Posterior vena cava (tissue), 2 donors: ENCODE measurements at regions of chr17 and their contacts with region 1.

Region 1: GRCh38 chr17:17681187-17681848 is at the start of gene RAI1:
- DNase-seq: peak; percentile 91
- total RNA-seq, gene RAI1: 25.6 to 36.5 TPM

Region 2: DNA sequence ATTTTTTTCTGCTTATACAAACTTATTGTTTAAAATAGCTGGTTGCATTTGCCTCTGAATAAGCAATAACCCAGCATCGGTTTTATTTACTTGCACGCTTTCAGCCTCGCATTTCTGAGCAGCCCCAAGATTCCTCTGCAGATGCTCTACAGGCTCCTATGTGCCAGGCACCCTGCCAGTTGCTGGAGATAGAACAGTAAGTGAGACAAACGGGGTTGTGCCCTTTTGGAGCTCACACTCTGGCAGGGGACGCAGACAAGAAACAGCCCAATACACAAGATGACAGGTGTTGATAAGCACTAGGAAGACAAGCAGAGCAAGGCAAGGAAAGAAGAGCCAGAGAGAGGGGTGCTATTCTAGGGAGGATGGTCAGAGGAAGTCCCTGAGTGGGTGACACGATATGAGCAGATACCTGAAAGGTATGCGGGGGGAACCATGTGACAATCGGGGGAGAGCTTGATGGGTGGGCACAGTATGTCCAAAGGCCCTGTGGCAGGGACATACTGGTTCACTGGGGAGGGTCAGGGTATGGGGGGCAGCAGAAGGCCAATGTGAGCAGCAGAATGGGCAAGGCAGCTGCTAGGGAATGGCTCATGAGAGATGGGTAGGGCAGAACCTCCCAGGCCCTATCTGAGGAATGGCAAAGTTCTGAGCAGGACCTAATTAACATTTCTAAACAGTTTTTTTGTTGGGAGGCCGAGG is 1755.1 kb before region 1 on chr17:
- intact Hi-C with region 1: no loop called
- DNase-seq: peak; percentile 49

Region 3: DNA sequence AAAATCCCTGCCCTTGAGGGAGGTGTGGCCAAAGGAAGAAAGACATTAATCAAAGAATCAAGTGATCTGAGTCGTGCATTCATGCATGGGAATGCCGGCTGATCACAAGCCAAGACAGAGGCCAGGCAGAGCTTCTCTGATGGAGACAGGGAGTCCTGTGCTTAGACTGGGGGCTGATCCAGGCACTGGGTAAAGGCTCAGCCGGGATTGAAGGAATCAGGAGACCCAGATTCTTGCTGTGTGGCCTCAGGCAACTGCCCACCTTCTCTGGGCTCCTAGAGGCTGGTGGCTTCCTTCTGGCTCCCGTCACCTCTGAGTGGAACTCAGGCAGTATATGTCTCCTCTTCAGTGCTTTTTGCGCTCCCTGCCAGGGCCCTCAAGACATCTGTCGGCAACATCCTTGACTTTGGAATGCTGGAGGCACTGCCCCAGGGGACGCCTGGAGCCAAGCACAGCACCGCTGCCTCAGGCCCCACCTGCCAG is 17.6 kb after region 1 on chr17:
- intact Hi-C with region 1: no loop called
- DNase-seq: no peak

Region 4: GRCh38 chr17:17739388-17740066 is 58.2 kb after region 1 on chr17:
- intact Hi-C with region 1: loop called in 1 of 2 experiments (anchors 5 kb)
- DNase-seq: peak; percentile 86

Region 5: GRCh38 chr17:17812211-17813057 is 131.1 kb after region 1 on chr17:
- intact Hi-C with region 1: loop called in 1 of 2 experiments (anchors 5 kb)
- DNase-seq: peak; percentile 89

Region 6: GRCh38 chr17:17919169-17920107 is 238.1 kb after region 1 on chr17:
- intact Hi-C with region 1: loop called in 1 of 2 experiments (anchors 5 kb)
- DNase-seq: peak; percentile 83

Region 7: GRCh38 chr17:18205861-18206260 is 524.5 kb after region 1 on chr17:
- intact Hi-C with region 1: no loop called
- DNase-seq: no peak